WTC11 (cell line): ENCODE measurements at regions of chr1 and their contacts with region 1.

Region 1: GRCh38 chr1:35564037-35564883 is 6.7 kb downstream of the NCDN start:
- DNase-seq: peak; percentile 92
- ATAC-seq: peak; percentile 81
- H3K4me3 Mint-ChIP-seq: no peak overlapping the region
- H3K27ac Mint-ChIP-seq: peak overlapping the region; percentile 58
- H3K4me1 Mint-ChIP-seq: peaks cover 6% of the 10 kb centered on the region
- H3K27me3 Mint-ChIP-seq: peaks cover 5% of the 10 kb centered on the region
- CTCF ChIP-seq: peak; percentile 72

Region 2: DNA sequence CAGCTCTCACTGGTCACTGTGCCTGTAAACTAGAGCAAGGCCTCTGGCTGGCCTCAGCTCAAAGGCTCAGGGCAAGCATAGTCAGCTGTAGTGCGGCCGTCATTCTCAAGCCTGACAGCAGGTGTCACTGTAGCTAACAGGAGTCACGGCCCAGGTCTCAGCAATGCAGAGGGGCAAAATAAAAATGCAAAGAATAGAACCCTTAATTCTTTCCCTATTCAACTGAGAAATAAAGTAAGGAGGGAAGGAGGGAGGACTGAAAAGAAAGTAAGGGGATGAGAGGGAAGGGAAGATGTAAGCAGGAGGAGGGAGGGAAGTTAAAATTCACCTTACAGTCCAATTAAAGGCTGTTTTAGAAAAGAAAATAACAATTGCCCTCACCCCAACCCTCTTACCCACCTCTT is 113.1 kb before region 1 on chr1:
- CTCF ChIA-PET with region 1: interaction called, 52 read pairs
- POLR2A ChIA-PET with region 1: no interaction called
- DNase-seq: peak; percentile 86
- ATAC-seq: peak; percentile 96
- H3K4me3 Mint-ChIP-seq: no peak overlapping the region
- H3K27ac Mint-ChIP-seq: peak overlapping the region; percentile 85; the same call in 1 of the 2 replicates
- H3K4me1 Mint-ChIP-seq: no peaks in the 10 kb centered on the region
- H3K27me3 Mint-ChIP-seq: no peaks in the 10 kb centered on the region
- CTCF ChIP-seq: peak; percentile 67

Region 3: GRCh38 chr1:35577071-35577998 is 13.1 kb after region 1 on chr1:
- CTCF ChIA-PET with region 1: interaction called, 23 read pairs
- POLR2A ChIA-PET with region 1: interaction called, 3 read pairs
- DNase-seq: peak; percentile 54
- ATAC-seq: peak; percentile 29
- H3K4me3 Mint-ChIP-seq: peak overlapping the region; percentile 74
- H3K27ac Mint-ChIP-seq: no peak overlapping the region
- H3K4me1 Mint-ChIP-seq: peaks cover 38% of the 10 kb centered on the region
- H3K27me3 Mint-ChIP-seq: peaks cover 79% of the 10 kb centered on the region
- CTCF ChIP-seq: no peak

Region 4: GRCh38 chr1:35646043-35646442 is 81.8 kb after region 1 on chr1:
- CTCF ChIA-PET with region 1: interaction called, 15 read pairs
- POLR2A ChIA-PET with region 1: no interaction called
- DNase-seq: no peak
- ATAC-seq: peak; percentile 48
- H3K4me3 Mint-ChIP-seq: no peak overlapping the region
- H3K27ac Mint-ChIP-seq: no peak overlapping the region
- H3K4me1 Mint-ChIP-seq: no peaks in the 10 kb centered on the region
- H3K27me3 Mint-ChIP-seq: peaks cover 38% of the 10 kb centered on the region
- CTCF ChIP-seq: no peak

Region 5: GRCh38 chr1:35707601-35708440 is 143.6 kb after region 1 on chr1:
- CTCF ChIA-PET with region 1: interaction called, 28 read pairs
- POLR2A ChIA-PET with region 1: no interaction called
- DNase-seq: peak; percentile 75
- ATAC-seq: peak; percentile 64
- H3K4me3 Mint-ChIP-seq: peak overlapping the region; percentile 79
- H3K27ac Mint-ChIP-seq: no peak overlapping the region
- H3K4me1 Mint-ChIP-seq: peaks cover 36% of the 10 kb centered on the region
- H3K27me3 Mint-ChIP-seq: peaks cover 48% of the 10 kb centered on the region
- CTCF ChIP-seq: no peak

Region 6: DNA sequence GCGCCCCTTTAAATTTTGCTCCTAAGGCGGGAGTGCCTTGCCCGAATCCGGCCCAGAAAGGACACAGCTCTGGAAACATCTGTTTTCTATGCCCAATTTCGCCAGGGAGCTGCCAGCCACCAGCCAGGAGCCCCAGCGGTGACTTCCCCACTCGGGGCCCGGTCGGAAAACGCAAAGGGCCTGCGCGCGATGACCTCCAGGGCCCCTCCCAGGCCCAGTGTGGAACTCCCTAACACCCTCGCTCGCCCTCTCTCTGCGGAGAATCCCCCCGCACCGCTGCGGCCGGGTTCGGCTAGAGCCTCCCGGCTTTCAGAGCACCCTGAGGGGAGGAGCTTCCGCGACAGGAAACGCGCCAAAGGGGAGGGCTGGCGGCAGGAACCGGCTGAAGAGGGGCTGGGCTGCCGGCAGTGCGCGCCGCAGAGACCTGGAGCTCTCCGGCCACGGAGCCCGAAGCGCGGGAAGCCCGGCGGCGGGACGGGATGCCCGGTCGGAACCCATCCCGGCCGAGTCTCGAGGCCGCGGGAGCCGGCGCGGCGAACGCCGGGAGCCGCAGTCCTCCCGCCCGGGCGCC is 205.0 kb after region 1 on chr1:
- CTCF ChIA-PET with region 1: interaction called, 16 read pairs
- POLR2A ChIA-PET with region 1: no interaction called
- DNase-seq: peak; percentile 92
- ATAC-seq: peak; percentile 75
- H3K4me3 Mint-ChIP-seq: peak overlapping the region; percentile 99
- H3K27ac Mint-ChIP-seq: peak overlapping the region; percentile 79
- H3K4me1 Mint-ChIP-seq: peaks cover 3% of the 10 kb centered on the region; the same call in 1 of the 2 replicates
- H3K27me3 Mint-ChIP-seq: no peaks in the 10 kb centered on the region; the same call in 1 of the 2 replicates
- CTCF ChIP-seq: no peak

Region 7: GRCh38 chr1:35783055-35783583 is 218.9 kb after region 1 on chr1:
- CTCF ChIA-PET with region 1: no interaction called
- POLR2A ChIA-PET with region 1: no interaction called
- DNase-seq: no peak
- ATAC-seq: no peak
- H3K4me3 Mint-ChIP-seq: no peak overlapping the region
- H3K27ac Mint-ChIP-seq: no peak overlapping the region
- H3K4me1 Mint-ChIP-seq: no peaks in the 10 kb centered on the region
- H3K27me3 Mint-ChIP-seq: no peaks in the 10 kb centered on the region; the same call in 1 of the 2 replicates
- CTCF ChIP-seq: no peak

Region 8: DNA sequence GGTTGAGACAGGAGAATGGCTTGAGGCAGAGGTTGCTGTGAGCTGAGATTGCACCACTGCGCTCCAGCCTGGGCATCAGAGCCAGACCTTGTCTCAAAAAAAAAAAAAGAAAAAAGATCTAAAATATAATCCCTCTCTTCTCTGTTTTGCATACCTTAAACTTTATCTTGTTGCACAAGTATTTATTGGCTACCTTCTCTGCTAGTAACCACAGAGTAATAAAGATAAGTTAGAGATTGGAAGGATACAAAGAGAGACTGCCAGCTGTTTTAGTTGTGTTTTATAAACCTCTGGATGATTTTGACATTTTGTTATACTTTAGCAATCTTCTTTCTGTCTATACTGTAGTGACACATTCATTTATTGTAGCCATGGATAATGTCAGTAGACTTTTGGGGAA is 394.3 kb after region 1 on chr1:
- CTCF ChIA-PET with region 1: no interaction called
- POLR2A ChIA-PET with region 1: no interaction called
- DNase-seq: no peak
- ATAC-seq: no peak
- H3K4me3 Mint-ChIP-seq: no peak overlapping the region
- H3K27ac Mint-ChIP-seq: no peak overlapping the region
- H3K4me1 Mint-ChIP-seq: no peaks in the 10 kb centered on the region
- H3K27me3 Mint-ChIP-seq: no peaks in the 10 kb centered on the region
- CTCF ChIP-seq: no peak